Esophagus squamous epithelium (tissue), 5 donors: ENCODE measurements at regions of chr7 and their contacts with region 1.

Region 1: GRCh38 chr7:91880413-91881241 is at the start of gene MTERF1:
- DNase-seq: peak; percentile 31
- H3K4me3 ChIP-seq: peak within 1 kb of the TSS; percentile 59 to 93 (median 74)
- H3K27ac ChIP-seq: peak within 1 kb of the TSS; percentile 66 to 80 (median 75)
- H3K4me1 ChIP-seq: peaks cover 4 to 30% (median 11%) of the 10 kb centered on the region in 3 donors
- H3K27me3 ChIP-seq: no peaks in the 10 kb centered on the region
- CTCF ChIP-seq: peak; percentile 92 to 99 (median 96)
- POLR2A ChIP-seq: no peak
- total RNA-seq, gene MTERF1: 6.3 to 9.9 (median 9.2) TPM

Region 2: DNA sequence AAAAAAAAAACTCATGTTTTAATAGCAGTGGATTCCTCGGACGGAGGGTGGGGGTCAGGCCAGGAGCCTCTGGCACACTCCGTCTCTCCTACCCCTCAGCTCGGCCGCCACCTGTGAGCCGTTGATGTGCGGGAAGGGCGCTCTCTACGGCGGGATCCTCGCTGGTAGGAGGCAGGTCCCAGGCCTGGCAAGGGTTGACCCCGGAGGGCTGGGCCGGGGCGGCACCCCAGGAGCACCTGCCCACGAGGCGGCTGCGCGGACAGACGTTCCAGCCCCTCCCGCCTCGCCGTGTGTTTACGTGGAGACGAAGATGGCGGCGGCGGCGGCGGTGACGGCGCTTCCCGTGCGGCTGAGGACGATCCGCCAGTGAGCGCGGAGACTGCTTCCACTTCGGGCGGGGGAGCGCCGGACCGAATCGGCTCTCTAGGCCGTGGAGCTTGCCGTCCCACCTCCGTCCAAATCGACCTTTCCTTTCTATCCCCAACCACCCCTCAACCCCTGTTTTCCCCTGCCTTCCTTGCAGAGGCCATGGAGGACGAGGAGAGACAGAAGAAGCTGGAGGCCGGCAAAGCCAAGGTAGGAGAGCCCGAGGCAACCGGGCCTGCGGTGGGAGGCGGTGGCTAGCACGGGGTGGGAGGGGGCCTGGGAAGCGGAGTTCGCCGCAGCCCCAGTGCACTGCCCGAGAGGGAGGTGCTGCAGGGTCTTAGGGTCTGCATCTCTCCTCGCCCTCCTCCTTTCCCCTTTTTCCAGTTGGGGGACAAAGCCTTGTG is 60.1 kb after region 1 on chr7 and contains the start of gene AKAP9:
- intact Hi-C with region 1: loop called (anchors 10 kb)
- DNase-seq: peak; percentile 61
- H3K4me3 ChIP-seq: peak within 1 kb of the TSS; percentile 64 to 98 (median 85)
- H3K27ac ChIP-seq: peak within 1 kb of the TSS; percentile 89 to 99 (median 98)
- H3K4me1 ChIP-seq: peaks cover 0 to 52% (median 14%) of the 10 kb centered on the region in 3 donors
- H3K27me3 ChIP-seq: no peaks in the 10 kb centered on the region
- CTCF ChIP-seq: no peak
- POLR2A ChIP-seq: peak in 3 of 4 donors; percentile 38 to 86 (median 70)
- total RNA-seq, gene AKAP9: 49.7 to 82.6 (median 55.8) TPM